H1 (cell line): ENCODE measurements at regions of chr19 and their contacts with region 1.

Region 1: GRCh38 chr19:12681074-12681951 is at the start of gene DHPS:
- DNase-seq: peak; percentile 85 to 96
- H3K4me3 ChIP-seq: peak within 1 kb of the TSS; percentile 81 to 99 (median 90)
- H3K27ac ChIP-seq: peak within 1 kb of the TSS; percentile 98
- H3K4me1 ChIP-seq: peaks cover 0 to 3% (median 0%) of the 10 kb centered on the region in 4 experiments; a peak in 2 of 7 replicates
- H3K27me3 ChIP-seq: no peaks in the 10 kb centered on the region
- CTCF ChIP-seq: no peak
- EP300 ChIP-seq: no peak
- POLR2A ChIP-seq: peak; percentile 63 to 96
- RAD21 ChIP-seq: no peak
- total RNA-seq, gene DHPS: 86.6 and 88.8 TPM in 2 replicates

Region 2: DNA sequence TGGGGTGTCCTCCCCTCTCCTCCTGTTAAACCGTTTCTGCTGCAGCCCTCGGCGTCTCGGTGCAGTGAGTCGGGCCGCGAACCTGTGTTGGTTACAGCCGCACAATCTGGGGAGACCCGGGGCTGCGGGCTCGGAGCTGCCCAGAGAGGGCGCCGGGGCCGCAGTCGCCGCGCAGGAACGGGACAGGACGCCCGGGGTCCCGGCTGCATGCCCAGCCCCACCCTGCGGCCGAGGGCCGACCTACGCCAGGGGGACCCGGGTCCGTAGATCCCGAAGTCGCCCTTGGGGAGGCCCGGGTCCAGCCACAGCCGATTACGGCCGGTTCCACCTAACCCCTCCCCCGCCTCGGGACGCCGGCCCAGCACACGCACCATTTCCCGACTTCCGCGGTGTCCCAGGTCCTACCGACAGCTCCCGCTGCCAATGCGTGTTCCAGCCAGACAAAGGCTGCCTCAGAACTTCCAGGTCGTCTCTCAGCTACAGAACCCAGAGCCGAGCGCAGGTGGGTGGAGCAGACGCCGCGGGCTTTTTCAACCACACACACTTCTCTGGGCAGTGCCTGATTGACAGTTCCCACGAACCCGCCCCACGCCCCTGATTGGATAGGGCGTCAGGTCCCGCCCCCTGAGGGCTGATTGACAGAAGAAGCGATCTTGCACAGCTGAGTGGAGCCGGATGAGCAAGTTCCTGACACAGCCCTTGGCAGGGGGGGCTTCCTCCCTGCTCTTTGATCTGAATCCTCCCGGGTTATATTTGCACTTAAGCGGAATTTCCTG is 240.6 kb before region 1 on chr19 and contains the start of gene ZNF443:
- CTCF ChIA-PET with region 1: no interaction called
- POLR2A ChIA-PET with region 1: no interaction called
- DNase-seq: peak; percentile 92 to 99
- H3K4me3 ChIP-seq: peak within 1 kb of the TSS; percentile 74 to 91 (median 82)
- H3K27ac ChIP-seq: peak within 1 kb of the TSS; percentile 76
- H3K4me1 ChIP-seq: no peaks in the 10 kb centered on the region
- H3K27me3 ChIP-seq: no peaks in the 10 kb centered on the region
- CTCF ChIP-seq: 0 out of 4 replicates have a peak, but pooled peaks of 1 of the 3 experiments have one; percentile 4
- EP300 ChIP-seq: no peak
- POLR2A ChIP-seq: peak; percentile 43 to 88
- RAD21 ChIP-seq: no peak; a peak in 1 of 4 replicates
- total RNA-seq, gene ZNF443: 7.8 and 9.2 TPM in 2 replicates

Region 3: GRCh38 chr19:12628040-12629022 is 53.0 kb before region 1 on chr19:
- CTCF ChIA-PET with region 1: no interaction called
- POLR2A ChIA-PET with region 1: no interaction called
- DNase-seq: no peak
- H3K4me3 ChIP-seq: peak overlapping the region in 1 of 4 experiments; percentile 17; a peak in 1 of 8 replicates
- H3K27ac ChIP-seq: no peak overlapping the region
- H3K4me1 ChIP-seq: no peaks in the 10 kb centered on the region
- H3K27me3 ChIP-seq: no peaks in the 10 kb centered on the region
- CTCF ChIP-seq: no peak
- EP300 ChIP-seq: no peak
- POLR2A ChIP-seq: no peak
- RAD21 ChIP-seq: no peak

Region 4: DNA sequence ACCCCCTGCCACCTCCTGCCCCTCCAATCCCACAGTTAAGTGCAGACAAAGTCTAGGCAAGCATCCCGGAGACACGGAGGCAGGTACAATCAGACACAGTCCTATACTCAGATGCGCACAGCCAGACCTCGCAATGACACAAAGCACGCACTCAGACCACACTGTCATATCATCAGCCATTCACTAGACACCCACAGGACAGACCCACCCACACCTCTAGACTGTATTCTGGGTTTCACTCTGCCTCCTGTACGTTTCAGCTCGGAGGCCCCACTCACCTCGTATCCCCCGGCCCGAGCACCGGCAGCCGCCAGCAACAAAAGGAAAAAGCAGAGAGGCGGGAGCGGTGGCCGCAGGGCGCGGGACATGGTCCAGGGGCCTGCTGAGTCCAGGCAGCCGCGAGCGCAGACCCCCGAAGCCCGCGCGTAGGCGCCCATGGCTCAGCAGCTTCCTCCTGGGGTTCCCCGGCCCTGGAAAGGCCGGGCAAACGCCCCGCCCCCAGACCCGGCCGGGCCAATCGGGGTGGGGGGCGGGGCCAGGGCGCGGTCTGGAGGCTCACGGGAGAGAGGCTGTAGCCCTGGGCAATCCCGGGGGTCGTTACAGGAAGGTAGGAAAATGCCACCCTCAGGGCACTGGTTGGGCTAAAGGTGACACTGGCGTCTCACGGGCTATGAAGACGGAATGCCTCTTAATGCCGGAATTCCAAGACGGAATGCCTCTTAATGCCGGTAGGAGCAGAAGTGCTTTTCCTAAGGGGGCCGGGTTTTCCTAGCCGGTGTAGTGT is 14.9 kb before region 1 on chr19 and contains the starts of genes MAN2B1 and WDR83:
- CTCF ChIA-PET with region 1: interaction called, 13 read pairs
- POLR2A ChIA-PET with region 1: interaction called, 31 read pairs
- DNase-seq: peak in 1 of 2 experiments; percentile 85
- H3K4me3 ChIP-seq: peak within 1 kb of the TSS; percentile 88 to 97 (median 92)
- H3K27ac ChIP-seq: peak within 1 kb of the TSS; percentile 41; the same call in 1 of the 2 replicates
- H3K4me1 ChIP-seq: peaks cover 3 to 22% (median 7%) of the 10 kb centered on the region in 4 experiments
- H3K27me3 ChIP-seq: no peaks in the 10 kb centered on the region; a peak in 1 of 7 replicates
- CTCF ChIP-seq: no peak
- EP300 ChIP-seq: no peak
- POLR2A ChIP-seq: peak in 1 of 2 experiments; percentile 67; a peak in 2 of 3 replicates
- RAD21 ChIP-seq: no peak
- total RNA-seq, gene MAN2B1: 71.1 and 76.3 TPM in 2 replicates
- total RNA-seq, gene WDR83: 15.3 and 19.6 TPM in 2 replicates

Region 5: DNA sequence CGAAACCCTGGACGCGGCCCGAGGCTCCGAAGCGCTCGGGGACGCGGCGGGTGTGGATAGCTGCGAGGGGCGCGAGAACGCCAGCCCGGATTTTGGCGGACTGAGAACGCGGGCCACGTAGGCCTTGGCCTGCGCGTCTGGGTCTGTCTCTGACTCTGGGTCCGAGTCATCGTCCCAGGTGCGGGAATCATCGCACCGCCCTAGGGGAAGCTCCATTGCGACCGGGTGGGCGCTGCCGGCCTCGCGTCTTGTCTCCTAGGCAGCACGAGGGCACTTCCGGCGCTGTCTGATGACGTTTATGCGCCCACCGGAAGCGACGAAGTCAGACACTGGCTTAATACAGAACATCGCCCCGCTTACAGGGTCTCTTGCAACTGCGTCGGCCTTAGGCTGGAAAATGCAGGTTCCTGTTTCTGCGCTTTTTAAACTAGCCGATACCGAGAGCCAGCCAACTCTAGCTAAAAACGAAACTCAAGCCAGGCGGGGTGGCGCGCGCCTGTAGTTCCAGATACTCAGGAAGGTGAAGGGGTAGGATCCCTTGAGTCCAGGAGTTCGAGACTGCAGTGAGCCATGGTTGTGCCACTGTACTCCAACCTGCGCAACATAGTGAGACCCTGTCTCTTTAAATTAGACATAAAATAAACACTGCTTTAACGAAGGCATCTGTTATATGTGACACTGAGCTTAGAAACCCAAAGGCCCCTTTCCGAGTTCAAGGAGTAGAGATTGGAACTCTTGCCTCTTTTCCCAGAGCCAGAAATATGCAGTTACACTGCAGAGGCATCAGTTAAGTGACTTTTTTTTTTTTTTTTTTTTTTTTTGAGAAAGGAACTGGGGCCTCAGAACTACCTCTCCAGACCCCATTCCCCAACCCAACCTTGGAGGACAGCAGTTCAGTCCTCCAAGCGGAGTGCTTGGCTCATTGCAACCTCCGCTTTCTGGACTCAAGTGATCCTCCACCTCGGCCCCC is 15.3 kb after region 1 on chr19 and contains the start of gene FBXW9:
- CTCF ChIA-PET with region 1: interaction called, 4 read pairs
- POLR2A ChIA-PET with region 1: interaction called, 93 read pairs
- DNase-seq: peak; percentile 88 to 99
- H3K4me3 ChIP-seq: peak within 1 kb of the TSS; percentile 68 to 87 (median 82)
- H3K27ac ChIP-seq: peak within 1 kb of the TSS; percentile 83
- H3K4me1 ChIP-seq: peaks cover 0 to 4% (median 3%) of the 10 kb centered on the region in 4 experiments; a peak in 2 of 7 replicates
- H3K27me3 ChIP-seq: no peaks in the 10 kb centered on the region
- CTCF ChIP-seq: no peak
- EP300 ChIP-seq: no peak
- POLR2A ChIP-seq: peak; percentile 87 to 93
- RAD21 ChIP-seq: no peak
- total RNA-seq, gene FBXW9: 10.8 and 11.1 TPM in 2 replicates

Region 6: GRCh38 chr19:12716861-12717260 is 35.5 kb after region 1 on chr19:
- CTCF ChIA-PET with region 1: interaction called, 3 read pairs
- POLR2A ChIA-PET with region 1: interaction called, 22 read pairs
- DNase-seq: no peak
- H3K4me3 ChIP-seq: no peak overlapping the region
- H3K27ac ChIP-seq: no peak overlapping the region
- H3K4me1 ChIP-seq: peaks cover 0 to 6% (median 2%) of the 10 kb centered on the region in 4 experiments; a peak in 4 of 7 replicates
- H3K27me3 ChIP-seq: no peaks in the 10 kb centered on the region
- CTCF ChIP-seq: peak; percentile 19 to 65 (median 41); a peak in 3 of 4 replicates
- EP300 ChIP-seq: no peak
- POLR2A ChIP-seq: no peak
- RAD21 ChIP-seq: peak; percentile 60 to 68